ENCODE measurements at regions of chr14 and their contacts with region 1.

Region 1: DNA sequence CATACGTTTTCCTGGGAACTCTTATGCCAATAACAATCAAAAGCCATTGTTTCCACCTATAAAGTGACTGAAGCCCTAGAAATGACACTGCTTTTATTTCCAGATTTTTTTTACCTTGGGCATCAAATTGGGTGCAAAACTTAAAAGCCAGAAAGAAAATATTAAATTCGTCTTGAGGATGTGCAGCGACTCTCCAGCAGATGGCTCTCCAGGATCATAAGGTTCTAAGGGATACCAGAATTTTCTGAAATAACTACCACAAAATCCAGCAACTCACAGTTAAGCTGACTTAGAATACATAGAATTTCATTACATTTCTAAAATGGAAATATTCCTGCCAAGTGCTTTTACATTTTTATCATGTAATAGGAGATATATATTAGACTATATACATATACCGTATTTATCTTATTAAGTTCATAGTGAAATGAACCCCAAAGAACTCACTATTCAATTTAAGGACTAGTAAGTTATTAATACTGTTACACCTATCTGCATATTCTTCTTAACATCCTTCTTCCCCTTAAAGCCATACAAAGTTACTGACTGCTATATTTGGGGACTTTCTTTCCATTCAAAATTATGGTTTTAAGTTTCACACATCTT is 44.0 kb downstream of the ARMH4 start:
- DNase-seq: peak; percentile 40 to 76
- ATAC-seq: peak; percentile 62 to 80; a peak in 4 of 6 replicates
- H3K4me3 ChIP-seq: no peak overlapping the region
- H3K27ac ChIP-seq: no peak overlapping the region
- H3K4me1 ChIP-seq: no peaks in the 10 kb centered on the region
- CTCF ChIP-seq: peak; percentile 95
- EP300 ChIP-seq: no peak
- POLR2A ChIP-seq: no peak
- RAD21 ChIP-seq: peak; percentile 89 to 92

Region 2: DNA sequence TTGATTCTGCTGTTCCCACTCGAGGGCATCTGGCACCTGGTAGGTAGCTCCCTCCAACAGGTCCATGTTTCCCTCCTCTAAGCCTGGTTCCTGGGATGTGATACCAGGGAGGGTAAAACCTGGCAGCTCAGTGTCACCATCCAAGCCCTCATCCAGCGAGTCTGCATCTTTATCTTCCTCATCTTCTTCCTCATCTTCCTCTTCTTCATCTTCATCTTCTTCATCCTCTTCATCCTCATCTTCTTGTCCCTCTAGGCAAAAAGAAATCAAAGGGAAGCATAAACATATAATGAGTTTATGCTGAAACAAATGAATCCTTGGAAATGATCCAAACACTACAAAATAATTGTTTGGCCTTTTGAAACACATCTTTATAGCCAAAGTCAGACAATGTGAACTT is 11.3 kb before region 1 on chr14:
- CTCF ChIA-PET with region 1: interaction called, 11 read pairs
- POLR2A ChIA-PET with region 1: no interaction called
- DNase-seq: no peak
- ATAC-seq: no peak
- H3K4me3 ChIP-seq: no peak overlapping the region
- H3K27ac ChIP-seq: no peak overlapping the region
- H3K4me1 ChIP-seq: no peaks in the 10 kb centered on the region
- CTCF ChIP-seq: no peak
- EP300 ChIP-seq: no peak
- POLR2A ChIP-seq: no peak
- RAD21 ChIP-seq: no peak

Region 3: DNA sequence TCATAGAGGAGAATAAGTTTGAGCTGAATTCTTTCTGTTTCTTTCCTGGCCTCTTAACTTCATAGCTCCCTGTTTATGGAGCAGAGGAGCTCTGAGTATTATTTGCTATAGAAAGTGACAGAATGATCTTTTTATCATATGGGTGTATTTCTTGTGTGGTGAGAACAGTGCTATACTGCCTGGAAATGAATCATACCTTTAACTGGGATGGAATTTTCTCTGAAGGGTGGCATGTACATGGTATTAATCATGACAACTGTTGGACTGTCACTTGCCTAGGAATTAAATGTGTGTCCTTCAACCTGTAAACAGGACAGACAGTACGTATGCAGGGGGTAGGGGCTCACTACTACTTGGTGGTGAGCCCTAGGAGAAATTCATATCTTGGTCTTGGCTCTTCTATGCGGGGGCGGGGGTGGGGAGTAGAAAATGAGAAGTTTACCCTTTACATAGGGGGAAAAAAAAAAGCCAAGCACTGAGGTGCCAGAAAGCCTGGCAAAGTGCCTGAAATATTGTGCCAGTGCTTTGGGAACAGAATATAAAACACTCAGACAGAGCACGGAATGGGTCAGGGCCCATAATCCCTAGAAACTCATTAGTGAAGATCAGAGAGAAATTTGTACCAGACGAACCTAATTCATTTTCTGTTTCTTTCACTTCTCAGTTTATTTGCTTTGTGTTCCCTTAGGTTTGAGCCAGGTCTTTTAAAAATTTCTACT is 10.2 kb after region 1 on chr14:
- CTCF ChIA-PET with region 1: interaction called, 19 read pairs
- POLR2A ChIA-PET with region 1: no interaction called
- DNase-seq: no peak
- ATAC-seq: no peak
- H3K4me3 ChIP-seq: no peak overlapping the region
- H3K27ac ChIP-seq: no peak overlapping the region
- H3K4me1 ChIP-seq: no peaks in the 10 kb centered on the region
- CTCF ChIP-seq: no peak
- EP300 ChIP-seq: no peak
- POLR2A ChIP-seq: no peak
- RAD21 ChIP-seq: no peak

Region 4: DNA sequence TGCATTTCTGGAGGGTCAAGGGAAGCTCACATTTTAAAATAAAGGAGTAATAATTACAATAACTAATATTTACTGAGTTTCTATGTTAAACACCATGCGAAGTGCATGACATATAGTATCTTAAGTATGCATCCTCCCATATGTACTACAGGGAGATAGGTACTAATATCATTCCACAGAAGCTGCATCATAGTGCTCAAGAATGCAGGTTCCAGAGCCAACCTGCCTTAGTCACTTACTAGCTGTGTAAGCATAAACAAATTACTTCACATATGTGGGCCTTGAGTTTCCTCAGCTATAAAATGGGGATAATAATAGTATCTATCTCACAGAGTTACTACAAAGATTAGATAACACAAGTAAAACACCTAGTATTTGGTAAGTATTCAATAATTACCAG is 25.7 kb after region 1 on chr14:
- CTCF ChIA-PET with region 1: interaction called, 11 read pairs
- POLR2A ChIA-PET with region 1: no interaction called
- DNase-seq: peak in 1 of 2 experiments; percentile 32
- ATAC-seq: peak; percentile 65 to 73; a peak in 4 of 6 replicates
- H3K4me3 ChIP-seq: no peak overlapping the region
- H3K27ac ChIP-seq: no peak overlapping the region
- H3K4me1 ChIP-seq: peaks cover 7% of the 10 kb centered on the region; the same call in 2 of the 3 replicates
- CTCF ChIP-seq: no peak
- EP300 ChIP-seq: no peak
- POLR2A ChIP-seq: no peak
- RAD21 ChIP-seq: no peak

Region 5: GRCh38 chr14:58166005-58166983 is 58.2 kb after region 1 on chr14:
- CTCF ChIA-PET with region 1: interaction called, 79 read pairs
- POLR2A ChIA-PET with region 1: no interaction called
- DNase-seq: peak; percentile 55 to 79
- ATAC-seq: peak; percentile 73 to 90
- H3K4me3 ChIP-seq: no peak overlapping the region
- H3K27ac ChIP-seq: no peak overlapping the region
- H3K4me1 ChIP-seq: peaks cover 6% of the 10 kb centered on the region; the same call in 2 of the 3 replicates
- CTCF ChIP-seq: peak; percentile 81
- EP300 ChIP-seq: no peak
- POLR2A ChIP-seq: no peak
- RAD21 ChIP-seq: peak; percentile 60 to 70

Region 6: DNA sequence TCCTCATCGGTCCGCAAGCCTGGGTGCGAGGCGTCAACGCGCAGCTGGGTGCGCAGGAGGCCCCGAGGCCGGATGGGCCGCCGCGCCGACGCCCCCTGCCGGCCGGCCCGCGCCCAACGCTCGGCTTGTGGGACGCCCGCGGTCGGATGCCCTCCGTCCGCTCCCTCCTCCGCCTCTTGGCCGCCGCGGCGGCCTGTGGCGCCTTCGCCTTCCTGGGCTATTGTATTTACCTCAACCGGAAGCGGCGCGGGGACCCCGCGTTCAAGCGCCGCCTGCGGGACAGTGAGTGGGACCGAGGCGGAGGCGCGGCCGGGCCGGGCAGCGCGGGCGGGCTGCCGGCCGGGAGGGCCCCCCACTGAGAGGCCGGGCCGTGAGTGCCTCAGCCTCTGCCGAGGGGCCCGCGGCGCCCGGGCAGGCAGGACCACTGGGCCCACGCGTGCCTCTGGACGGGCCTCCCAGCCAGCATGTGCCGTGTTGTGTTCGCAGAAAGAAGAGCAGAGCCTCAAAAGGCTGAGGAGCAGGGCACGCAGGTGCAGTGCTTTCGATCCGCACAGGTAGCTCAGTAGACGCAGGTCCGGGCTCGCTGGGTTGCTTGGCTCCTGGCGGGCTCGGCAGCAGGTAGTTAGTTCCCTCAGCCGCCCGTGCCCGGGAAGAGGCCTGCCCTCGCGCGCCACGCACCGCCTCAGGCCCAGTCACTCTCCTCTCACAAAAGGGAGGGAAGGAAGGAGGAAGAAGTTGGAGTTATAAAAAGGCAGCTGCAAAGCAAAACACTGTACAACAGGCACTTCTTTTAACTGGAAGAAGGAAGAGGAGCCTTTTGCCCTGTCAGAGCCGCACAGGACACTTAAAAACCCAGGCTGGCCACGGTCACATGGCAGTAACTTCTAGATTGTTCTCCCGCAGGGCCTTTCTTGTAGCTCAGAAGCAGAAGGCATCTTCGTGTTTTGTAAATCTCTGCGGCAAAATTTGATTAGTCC is 288.1 kb after region 1 on chr14 and contains the start of gene TOMM20L:
- CTCF ChIA-PET with region 1: interaction called, 35 read pairs
- POLR2A ChIA-PET with region 1: no interaction called
- DNase-seq: peak; percentile 65 to 69
- ATAC-seq: peak; percentile 98
- H3K4me3 ChIP-seq: peak within 1 kb of the TSS; percentile 51
- H3K27ac ChIP-seq: peak within 1 kb of the TSS; percentile 73 to 95
- H3K4me1 ChIP-seq: peaks cover 20% of the 10 kb centered on the region
- CTCF ChIP-seq: peak; percentile 94
- EP300 ChIP-seq: no peak
- POLR2A ChIP-seq: peak; percentile 17; the same call in 1 of the 2 replicates
- RAD21 ChIP-seq: peak; percentile 22 to 62; a peak in 4 of 5 replicates
- polyA plus RNA-seq, gene TOMM20L: not detected in 2 replicates

Measured in A549 (cell line).